Ovary (tissue), 10 donors: ENCODE measurements at regions of chr15 and their contacts with region 1.

Region 1: GRCh38 chr15:94015324-94015723 is 216.0 kb upstream of the MCTP2 start:
- DNase-seq: no peak
- H3K4me3 ChIP-seq: no peak overlapping the region
- H3K27ac ChIP-seq: no peak overlapping the region
- H3K4me1 ChIP-seq: no peaks in the 10 kb centered on the region
- H3K27me3 ChIP-seq: no peaks in the 10 kb centered on the region
- CTCF ChIP-seq: no peak
- EP300 ChIP-seq: no peak
- POLR2A ChIP-seq: no peak

Region 2: GRCh38 chr15:93826790-93827189 is 188.5 kb before region 1 on chr15:
- intact Hi-C with region 1: loop called in 1 of 4 experiments (anchors 10 kb)
- DNase-seq: peak; percentile 28 to 57 (median 49)
- H3K4me3 ChIP-seq: no peak overlapping the region
- H3K27ac ChIP-seq: peak overlapping the region in 1 of 2 donors; percentile 4
- H3K4me1 ChIP-seq: peaks cover 9% of the 10 kb centered on the region
- H3K27me3 ChIP-seq: no peaks in the 10 kb centered on the region
- CTCF ChIP-seq: no peak
- EP300 ChIP-seq: no peak
- POLR2A ChIP-seq: no peak